ENCODE measurements at regions of chr2 and their contacts with region 1.

Region 1: GRCh38 chr2:134245340-134245984 is 8.4 kb upstream of the MGAT5 start:
- DNase-seq: peak; percentile 84
- ATAC-seq: peak; percentile 71
- H3K4me3 ChIP-seq: no peak overlapping the region
- H3K27ac ChIP-seq: no peak overlapping the region
- H3K4me1 ChIP-seq: no peaks in the 10 kb centered on the region
- H3K27me3 ChIP-seq: no peaks in the 10 kb centered on the region
- CTCF ChIP-seq: peak; percentile 93

Region 2: DNA sequence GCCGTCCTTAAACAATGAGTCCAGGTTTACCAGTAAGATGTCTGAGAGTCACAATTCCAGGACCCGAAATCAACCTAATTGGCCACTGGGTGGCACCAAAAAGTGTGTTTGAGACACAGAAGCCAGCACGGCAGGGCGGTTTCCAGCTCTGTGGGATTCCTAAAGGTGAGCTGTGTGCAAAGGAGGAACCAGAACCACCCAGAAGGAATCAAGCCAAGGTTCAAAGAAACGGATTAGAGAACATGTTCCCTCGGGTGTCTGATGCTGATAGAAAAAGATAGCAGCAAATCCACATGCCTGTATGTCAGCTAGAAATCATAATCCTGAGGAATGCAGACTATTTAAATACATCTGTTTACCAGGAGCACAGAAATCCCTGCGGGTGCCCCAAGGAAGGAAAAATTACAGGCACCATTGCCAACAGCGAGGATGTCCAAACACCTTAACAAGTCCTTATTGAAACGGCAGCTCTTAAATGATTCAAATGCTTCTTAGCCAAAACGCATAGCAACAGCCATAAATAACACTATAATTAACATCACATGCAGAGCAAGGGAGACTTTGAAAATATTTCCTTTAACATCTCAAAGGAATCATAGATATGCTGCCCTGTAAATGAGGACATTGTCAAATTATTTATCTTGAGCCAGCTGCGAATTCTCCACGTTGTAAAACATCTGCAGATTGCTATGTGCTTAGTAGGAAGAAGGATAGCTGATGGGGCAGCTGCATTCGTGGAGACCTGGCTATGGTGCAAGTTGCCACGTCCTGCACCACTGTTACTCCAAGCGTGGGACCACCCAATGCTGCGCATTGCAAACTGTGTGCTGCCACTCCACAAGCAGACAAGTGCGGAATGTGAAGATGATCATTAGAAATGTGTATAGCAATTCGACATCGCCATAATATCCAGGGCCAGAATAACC is 358.5 kb before region 1 on chr2:
- CTCF ChIA-PET with region 1: interaction called, 4 read pairs
- POLR2A ChIA-PET with region 1: no interaction called
- intact Hi-C with region 1: loop called (anchors 1 kb)
- DNase-seq: peak; percentile 91
- ATAC-seq: peak; percentile 83
- H3K4me3 ChIP-seq: peak overlapping the region; percentile 46; the same call in 1 of the 2 replicates
- H3K27ac ChIP-seq: no peak overlapping the region
- H3K4me1 ChIP-seq: peaks cover 17% of the 10 kb centered on the region
- H3K27me3 ChIP-seq: no peaks in the 10 kb centered on the region
- CTCF ChIP-seq: peak; percentile 85

Region 3: DNA sequence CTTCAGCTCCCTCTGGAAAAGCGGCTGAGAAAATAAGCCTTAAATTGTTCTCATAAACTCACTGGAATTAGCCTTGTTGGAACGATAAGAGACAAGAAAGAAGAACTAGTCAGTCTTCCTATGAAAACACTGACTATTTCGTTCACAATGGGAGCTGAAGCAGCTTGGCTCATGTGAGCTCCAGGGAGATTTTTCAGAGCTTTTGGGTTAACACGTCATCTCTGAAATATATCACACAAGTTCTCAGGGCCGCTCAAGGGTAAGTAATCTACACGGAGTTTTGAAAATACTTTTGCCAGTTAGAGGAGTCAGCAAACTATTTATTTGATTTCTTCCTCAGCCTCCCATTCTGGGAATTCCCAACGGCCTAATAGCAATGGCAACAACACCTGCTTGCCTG is 307.8 kb before region 1 on chr2:
- CTCF ChIA-PET with region 1: no interaction called
- POLR2A ChIA-PET with region 1: no interaction called
- intact Hi-C with region 1: no loop called
- DNase-seq: no peak
- ATAC-seq: no peak
- H3K4me3 ChIP-seq: no peak overlapping the region
- H3K27ac ChIP-seq: no peak overlapping the region
- H3K4me1 ChIP-seq: no peaks in the 10 kb centered on the region
- H3K27me3 ChIP-seq: peaks cover 10% of the 10 kb centered on the region; the same call in 1 of the 2 replicates
- CTCF ChIP-seq: no peak

Region 4: GRCh38 chr2:134262684-134263083 is 17.2 kb after region 1 on chr2:
- CTCF ChIA-PET with region 1: no interaction called
- POLR2A ChIA-PET with region 1: interaction called, 14 read pairs
- intact Hi-C with region 1: no loop called
- DNase-seq: no peak
- ATAC-seq: no peak
- H3K4me3 ChIP-seq: no peak overlapping the region
- H3K27ac ChIP-seq: no peak overlapping the region
- H3K4me1 ChIP-seq: no peaks in the 10 kb centered on the region
- H3K27me3 ChIP-seq: no peaks in the 10 kb centered on the region
- CTCF ChIP-seq: no peak

Region 5: GRCh38 chr2:134411828-134412638 is 166.6 kb after region 1 on chr2:
- CTCF ChIA-PET with region 1: interaction called, 4 read pairs
- POLR2A ChIA-PET with region 1: no interaction called
- intact Hi-C with region 1: loop called (anchors 5 kb)
- DNase-seq: peak; percentile 77
- ATAC-seq: peak; percentile 59
- H3K4me3 ChIP-seq: no peak overlapping the region
- H3K27ac ChIP-seq: no peak overlapping the region
- H3K4me1 ChIP-seq: peaks cover 32% of the 10 kb centered on the region
- H3K27me3 ChIP-seq: no peaks in the 10 kb centered on the region
- CTCF ChIP-seq: peak; percentile 84

Region 6: DNA sequence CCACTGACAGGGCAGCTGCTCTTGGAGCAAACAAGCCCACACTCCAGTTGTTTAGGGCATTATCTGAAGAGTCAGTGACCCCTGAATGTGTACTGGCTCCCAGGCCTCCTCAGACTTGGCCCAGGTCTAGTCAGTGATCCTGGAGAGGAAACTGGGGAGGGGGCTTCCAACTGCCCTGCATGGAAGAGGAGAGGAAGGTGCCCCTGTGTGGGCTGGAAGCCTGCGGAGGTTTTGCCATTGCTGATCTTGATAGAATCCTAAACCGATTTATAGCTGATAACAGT is 205.8 kb after region 1 on chr2:
- CTCF ChIA-PET with region 1: interaction called, 7 read pairs
- POLR2A ChIA-PET with region 1: no interaction called
- intact Hi-C with region 1: loop called (anchors 2 kb)
- DNase-seq: no peak
- ATAC-seq: no peak
- H3K4me3 ChIP-seq: no peak overlapping the region
- H3K27ac ChIP-seq: no peak overlapping the region
- H3K4me1 ChIP-seq: peaks cover 7% of the 10 kb centered on the region
- H3K27me3 ChIP-seq: no peaks in the 10 kb centered on the region
- CTCF ChIP-seq: no peak

Measured in PC-3 (cell line).